A673 (cell line): ENCODE measurements at regions of chr16 and their contacts with region 1.

Region 1: DNA sequence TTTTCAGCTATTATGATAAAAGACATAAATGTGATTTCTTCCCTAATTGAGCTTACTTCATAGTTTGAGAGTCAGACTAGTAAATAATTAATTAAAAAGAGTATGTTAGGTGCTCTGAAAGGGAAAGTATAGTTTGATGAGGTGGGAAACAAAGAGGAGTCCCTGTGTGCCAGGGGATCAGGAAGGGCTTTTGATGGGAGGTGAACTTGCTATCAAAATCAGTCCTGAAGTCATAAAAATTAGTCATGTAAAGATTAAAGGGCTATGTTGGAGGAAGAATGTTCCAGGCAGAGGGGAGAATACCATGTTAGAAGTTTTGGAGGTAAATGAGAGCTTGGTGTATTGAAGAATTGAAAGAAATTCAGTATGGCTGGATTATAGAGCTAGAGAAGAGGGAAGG is 31.0 kb downstream of the NFAT5 start:
- DNase-seq: no peak
- H3K4me3 ChIP-seq: no peak overlapping the region
- H3K27ac ChIP-seq: no peak overlapping the region
- H3K4me1 ChIP-seq: peaks cover 15% of the 10 kb centered on the region
- H3K27me3 ChIP-seq: no peaks in the 10 kb centered on the region
- CTCF ChIP-seq: no peak

Region 2: GRCh38 chr16:69417520-69418199 is 179.1 kb before region 1 on chr16:
- CTCF ChIA-PET with region 1: no interaction called
- POLR2A ChIA-PET with region 1: no interaction called
- intact Hi-C with region 1: no loop called
- DNase-seq: no peak
- H3K4me3 ChIP-seq: no peak overlapping the region
- H3K27ac ChIP-seq: no peak overlapping the region
- H3K4me1 ChIP-seq: no peaks in the 10 kb centered on the region
- H3K27me3 ChIP-seq: no peaks in the 10 kb centered on the region
- CTCF ChIP-seq: no peak

Region 3: DNA sequence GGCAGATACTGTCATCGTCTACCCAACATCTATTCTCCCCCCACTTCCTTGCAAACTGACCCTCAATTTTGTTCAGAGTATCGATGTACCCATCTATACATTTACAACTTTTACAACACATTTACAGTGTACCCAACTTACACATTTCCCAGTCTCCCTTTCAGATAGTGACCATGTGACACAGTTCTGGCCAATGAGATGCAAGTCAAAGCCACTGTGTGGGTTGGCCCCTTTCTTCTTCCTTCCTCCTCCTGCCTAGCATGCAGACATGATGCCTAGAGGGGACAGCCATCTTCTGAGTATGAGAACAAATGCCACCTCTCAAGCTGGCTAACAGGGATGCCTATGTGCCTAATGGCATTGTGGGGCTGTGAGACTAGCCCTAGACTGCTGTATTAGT is 42.3 kb before region 1 on chr16:
- CTCF ChIA-PET with region 1: no interaction called
- POLR2A ChIA-PET with region 1: interaction called, 10 read pairs
- intact Hi-C with region 1: no loop called
- DNase-seq: no peak
- H3K4me3 ChIP-seq: no peak overlapping the region
- H3K27ac ChIP-seq: no peak overlapping the region
- H3K4me1 ChIP-seq: no peaks in the 10 kb centered on the region
- H3K27me3 ChIP-seq: no peaks in the 10 kb centered on the region
- CTCF ChIP-seq: no peak

Region 4: DNA sequence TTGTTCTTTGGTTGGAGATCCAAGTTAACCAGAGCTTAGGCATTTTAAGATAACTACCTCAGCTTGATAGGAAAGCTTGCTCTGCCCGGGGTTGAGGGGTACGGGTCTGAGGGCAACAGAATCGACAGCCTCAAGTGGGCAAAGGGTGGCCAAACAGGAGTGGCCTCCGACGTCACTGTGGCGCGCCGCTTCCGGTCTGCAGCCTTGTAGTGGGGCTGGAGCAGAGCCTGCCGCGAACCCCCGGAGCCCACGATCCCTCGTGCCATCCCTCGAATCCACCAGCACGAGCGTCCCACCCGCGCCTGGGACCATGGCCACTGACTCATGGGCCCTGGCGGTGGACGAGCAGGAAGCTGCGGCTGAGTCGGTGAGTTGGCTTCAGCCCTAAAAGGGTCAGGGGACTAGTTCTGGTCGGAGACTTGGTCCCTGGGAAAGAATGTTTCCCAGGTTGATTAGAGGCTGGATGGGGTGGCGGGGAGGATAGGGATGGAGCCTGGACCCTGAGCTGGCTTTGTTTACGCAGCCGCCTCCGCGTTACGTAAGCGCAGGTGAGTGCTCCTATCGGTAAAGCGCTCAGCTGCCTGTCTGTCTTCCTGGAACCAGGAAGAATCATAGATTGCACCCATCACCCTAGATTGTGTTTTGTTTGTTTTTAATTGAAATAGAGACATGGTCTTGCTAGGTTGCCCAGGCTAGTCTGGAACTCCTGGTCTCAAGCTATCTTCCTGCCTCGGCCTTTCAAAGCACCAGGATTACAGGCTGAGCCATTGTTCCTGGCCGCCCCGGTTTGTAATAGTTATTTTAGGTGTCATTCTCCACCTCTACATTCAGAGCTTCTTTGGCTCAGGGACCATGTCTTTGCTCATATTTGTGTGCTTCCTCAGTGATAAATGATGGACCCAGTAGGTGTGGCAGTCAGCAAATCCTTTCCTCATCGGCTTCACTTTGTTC is 702.5 kb after region 1 on chr16 and contains the start of gene DDX19B:
- CTCF ChIA-PET with region 1: no interaction called
- POLR2A ChIA-PET with region 1: no interaction called
- intact Hi-C with region 1: no loop called
- DNase-seq: peak; percentile 60
- H3K4me3 ChIP-seq: peak within 1 kb of the TSS; percentile 78
- H3K27ac ChIP-seq: peak within 1 kb of the TSS; percentile 81
- H3K4me1 ChIP-seq: peaks cover 4% of the 10 kb centered on the region
- H3K27me3 ChIP-seq: no peaks in the 10 kb centered on the region
- CTCF ChIP-seq: no peak
- total RNA-seq, gene DDX19B: 37.6 and 41.8 TPM in 2 replicates